ENCODE measurements at regions of chr9 and their contacts with region 1.

Region 1: DNA sequence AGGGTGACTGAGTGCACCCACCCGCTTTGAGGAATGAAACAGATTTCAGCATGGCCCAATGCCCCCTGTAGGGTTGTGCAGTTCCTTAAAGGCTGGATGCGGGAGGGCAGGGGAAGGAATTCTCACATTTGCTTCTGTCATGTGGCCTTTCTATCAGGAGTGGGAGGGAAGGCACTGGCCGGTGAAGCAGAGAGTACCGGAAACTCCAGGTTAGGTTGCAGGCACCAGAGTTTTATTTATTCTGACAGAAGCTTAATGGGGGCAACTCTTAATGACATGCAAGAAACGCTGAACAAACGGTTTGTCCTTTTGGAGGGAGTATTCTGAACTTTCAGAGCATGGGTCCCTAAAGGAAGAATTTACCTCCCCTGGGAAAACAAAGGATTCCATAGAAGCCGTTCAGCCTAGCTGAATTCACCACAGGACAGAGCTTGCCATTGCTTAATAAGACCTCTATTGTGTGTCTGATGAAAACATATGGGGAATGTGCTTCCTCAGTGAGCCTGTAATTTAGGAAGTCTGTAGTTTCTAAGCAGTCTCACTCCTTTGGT is 44.1 kb upstream of the EQTN start:
- DNase-seq: no peak
- H3K4me3 ChIP-seq: no peak overlapping the region
- H3K27ac ChIP-seq: peak overlapping the region in 2 of 5 donors; percentile 26 to 36
- H3K4me1 ChIP-seq: peaks cover 0 to 46% of the 10 kb centered on the region in 2 donors
- H3K27me3 ChIP-seq: no peaks in the 10 kb centered on the region
- CTCF ChIP-seq: no peak
- POLR2A ChIP-seq: no peak

Region 2: DNA sequence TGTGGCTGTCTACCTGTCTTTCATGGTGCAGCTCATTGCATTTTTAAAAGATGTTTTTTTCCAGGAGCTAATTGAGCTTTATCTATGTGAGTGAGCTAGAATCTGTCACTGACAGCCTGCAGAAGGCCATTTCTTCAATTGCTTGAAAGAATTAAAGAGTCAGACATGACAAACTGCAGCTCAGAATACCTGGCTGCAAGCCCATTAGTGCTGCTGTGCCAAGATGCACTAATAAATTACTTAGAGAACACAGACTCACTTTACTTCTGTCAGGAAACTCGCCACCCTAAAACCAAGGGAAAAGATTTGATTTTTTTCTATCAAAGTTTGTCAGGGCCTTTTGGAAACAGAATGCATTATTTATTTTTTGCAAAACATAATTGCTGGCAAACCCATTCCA is 816.8 kb before region 1 on chr9:
- intact Hi-C with region 1: no loop called
- DNase-seq: peak; percentile 66 to 95 (median 81)
- H3K4me3 ChIP-seq: no peak overlapping the region
- H3K27ac ChIP-seq: no peak overlapping the region
- H3K4me1 ChIP-seq: peaks cover 0 to 8% of the 10 kb centered on the region in 2 donors
- H3K27me3 ChIP-seq: no peaks in the 10 kb centered on the region
- CTCF ChIP-seq: no peak
- POLR2A ChIP-seq: no peak

Region 3: DNA sequence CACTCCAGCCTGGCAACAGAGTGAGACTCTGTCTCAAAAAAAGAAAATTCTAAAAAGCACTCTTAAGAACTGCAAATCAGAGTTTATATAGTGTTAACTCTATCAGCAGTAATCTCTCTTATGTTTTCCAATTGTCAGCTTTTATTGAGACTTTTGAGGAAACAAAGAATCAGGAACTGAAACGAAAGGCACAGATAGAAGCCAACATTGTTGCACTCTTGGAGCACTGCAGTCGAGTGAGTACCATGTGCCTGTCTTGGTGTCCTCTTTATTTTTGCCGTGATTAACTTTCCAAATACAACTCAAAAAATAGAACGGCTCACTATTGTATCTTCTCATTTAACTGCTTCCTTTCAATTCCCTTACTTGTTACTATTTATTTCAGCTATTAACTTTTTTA is 293.9 kb before region 1 on chr9:
- intact Hi-C with region 1: no loop called
- DNase-seq: no peak
- H3K4me3 ChIP-seq: no peak overlapping the region
- H3K27ac ChIP-seq: no peak overlapping the region
- H3K4me1 ChIP-seq: no peaks in the 10 kb centered on the region
- H3K27me3 ChIP-seq: no peaks in the 10 kb centered on the region
- CTCF ChIP-seq: no peak
- POLR2A ChIP-seq: no peak

Region 4: DNA sequence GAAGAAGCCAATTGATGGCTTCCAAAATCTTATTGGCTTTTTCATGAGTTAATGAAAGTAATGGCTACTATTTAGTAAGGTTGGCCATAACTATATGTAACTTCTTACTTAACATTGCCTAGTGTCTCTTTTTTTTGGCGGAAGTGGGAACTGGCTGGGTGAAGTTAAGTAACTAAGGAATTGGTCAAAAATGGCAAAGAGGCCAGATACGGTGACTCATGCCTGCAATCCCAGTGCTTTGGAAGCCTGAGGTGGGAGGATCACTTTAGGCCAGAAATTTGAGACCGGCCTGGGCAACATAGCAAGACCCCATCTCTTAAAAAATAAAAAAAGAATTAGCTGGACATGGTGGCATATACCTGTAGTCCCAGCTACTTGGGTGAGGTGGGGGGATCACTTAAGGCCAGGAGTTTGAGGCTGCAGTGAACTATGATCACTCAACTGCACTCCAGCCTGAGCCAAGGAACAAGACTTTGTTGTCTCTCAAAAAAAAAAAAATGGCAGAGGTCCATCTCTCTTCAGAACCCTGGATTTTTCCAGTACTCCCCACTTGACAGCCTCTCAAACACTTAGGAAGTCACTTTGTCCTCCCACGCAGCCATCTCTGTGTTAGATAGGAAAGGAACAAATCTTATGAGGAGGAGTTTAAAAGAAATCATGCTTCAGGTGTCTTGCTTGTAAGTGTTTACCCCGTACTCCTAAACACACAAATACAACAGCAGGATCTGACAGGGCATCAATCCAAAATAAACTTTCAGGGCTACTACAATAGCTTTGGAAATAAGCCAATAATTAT is 156.3 kb before region 1 on chr9:
- intact Hi-C with region 1: no loop called
- DNase-seq: peak in 3 of 7 donors; percentile 65 to 77 (median 66)
- H3K4me3 ChIP-seq: no peak overlapping the region
- H3K27ac ChIP-seq: no peak overlapping the region
- H3K4me1 ChIP-seq: no peaks in the 10 kb centered on the region
- H3K27me3 ChIP-seq: no peaks in the 10 kb centered on the region
- CTCF ChIP-seq: no peak
- POLR2A ChIP-seq: no peak

Region 5: DNA sequence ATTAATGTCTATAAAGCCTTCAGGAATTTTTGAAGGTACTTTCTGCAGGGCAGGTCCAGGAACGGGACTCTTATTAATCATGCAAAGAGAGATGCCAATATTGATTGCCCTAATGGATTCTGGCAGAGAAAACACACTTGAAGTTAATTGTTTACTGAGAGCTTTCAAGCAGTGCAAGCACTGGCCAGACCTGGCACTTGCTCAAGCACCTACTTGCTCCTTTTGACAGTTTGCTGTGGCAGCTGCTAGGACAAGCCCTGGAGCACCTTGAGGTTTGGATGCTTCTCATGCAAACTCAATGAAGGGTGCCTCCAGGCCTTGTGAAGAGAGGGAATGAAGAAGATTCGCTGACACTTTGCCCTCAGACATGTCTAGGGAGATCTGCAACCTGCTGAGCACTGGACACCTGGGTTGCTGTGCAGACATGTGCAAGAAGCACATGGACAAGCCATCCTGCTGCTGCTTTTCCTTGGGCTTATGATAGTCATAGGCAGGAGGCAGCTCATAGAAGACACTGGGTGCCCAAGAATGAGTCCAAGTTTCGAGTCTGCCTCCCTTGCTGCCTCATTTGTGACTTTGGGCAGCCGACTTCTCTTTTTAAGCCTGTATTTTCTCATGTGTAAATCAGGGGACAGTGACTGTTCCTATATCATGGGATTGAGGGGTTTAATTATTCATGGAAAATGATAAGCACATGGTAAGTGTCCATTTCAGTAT is 44.7 kb after region 1 on chr9:
- intact Hi-C with region 1: no loop called
- DNase-seq: no peak
- H3K4me3 ChIP-seq: no peak overlapping the region
- H3K27ac ChIP-seq: no peak overlapping the region
- H3K4me1 ChIP-seq: no peaks in the 10 kb centered on the region
- H3K27me3 ChIP-seq: no peaks in the 10 kb centered on the region
- CTCF ChIP-seq: no peak
- POLR2A ChIP-seq: no peak

Region 6: GRCh38 chr9:27407986-27408385 is 67.0 kb after region 1 on chr9:
- intact Hi-C with region 1: loop called in 1 of 2 experiments (anchors 10 kb)
- DNase-seq: no peak
- H3K4me3 ChIP-seq: no peak overlapping the region
- H3K27ac ChIP-seq: no peak overlapping the region
- H3K4me1 ChIP-seq: peaks cover 0 to 5% of the 10 kb centered on the region in 2 donors
- H3K27me3 ChIP-seq: no peaks in the 10 kb centered on the region
- CTCF ChIP-seq: no peak
- POLR2A ChIP-seq: no peak